CD4-positive, alpha-beta memory T cell (primary cell): ENCODE measurements at regions of chr6 and their contacts with region 1.

Region 1: DNA sequence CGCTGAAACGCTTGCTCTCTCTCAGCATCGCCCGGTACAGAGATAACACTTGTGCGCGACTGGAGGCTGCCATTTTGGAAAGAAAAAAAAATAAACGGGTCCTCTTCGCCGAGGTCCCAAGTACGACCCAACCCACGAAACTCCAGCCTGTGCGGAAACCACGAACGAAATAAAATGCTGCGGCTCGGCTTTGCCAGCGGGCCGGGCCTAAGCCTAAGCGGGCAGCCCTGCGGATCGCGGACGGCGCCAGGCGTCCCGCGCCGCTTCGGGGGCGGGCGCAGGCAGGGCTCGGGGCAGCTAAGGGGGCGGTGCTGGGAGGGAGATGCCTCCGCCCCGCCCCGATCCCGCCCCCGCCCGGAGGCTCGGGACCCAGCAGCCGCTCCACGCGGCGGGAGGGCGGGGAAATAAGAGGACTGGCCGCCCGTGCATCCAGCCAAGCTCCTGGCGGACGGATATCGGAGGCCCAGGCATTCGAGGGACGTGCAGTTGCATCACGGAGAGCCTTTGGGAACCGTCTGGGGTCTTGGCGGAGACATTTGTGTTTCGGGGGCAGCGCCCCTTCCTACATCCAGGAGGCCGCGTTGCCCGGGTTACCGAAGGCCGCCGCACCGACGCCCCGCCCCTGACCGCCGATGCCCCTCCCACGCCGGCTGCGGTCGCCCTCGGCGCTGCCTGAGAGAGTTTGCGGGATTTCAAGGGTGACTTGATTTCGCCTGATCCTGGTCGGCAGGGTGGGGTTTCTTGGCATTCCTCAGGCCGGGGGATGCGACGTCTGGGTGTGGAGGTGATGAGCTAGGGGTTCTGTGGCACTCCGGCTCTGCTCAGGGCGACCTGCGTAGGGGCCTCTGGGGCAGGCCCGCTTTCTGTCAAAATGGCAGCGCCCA is at the starts of genes FARS2 and LYRM4:
- DNase-seq: peak; percentile 90 to 99 (median 96)
- H3K4me3 ChIP-seq: peak within 1 kb of the TSS; percentile 95 to 96
- H3K4me3 Mint-ChIP-seq: peak within 1 kb of the TSS; percentile 96 to 99 (median 99)
- H3K27ac ChIP-seq: peak within 1 kb of the TSS; percentile 95
- H3K27ac Mint-ChIP-seq: peak within 1 kb of the TSS; percentile 99 to 100 (median 100)
- H3K4me1 ChIP-seq: peaks cover 21% of the 10 kb centered on the region
- H3K4me1 Mint-ChIP-seq: peaks cover 18 to 40% (median 27%) of the 10 kb centered on the region in 4 donors
- H3K27me3 ChIP-seq: no peaks in the 10 kb centered on the region
- H3K27me3 Mint-ChIP-seq: no peaks in the 10 kb centered on the region
- total RNA-seq, gene FARS2: 15.6 to 19.2 TPM
- total RNA-seq, gene LYRM4: 10.6 to 14.3 TPM

Region 2: GRCh38 chr6:5003604-5004372 is 257.1 kb before region 1 on chr6 and contains the start of gene RPP40:
- CTCF ChIA-PET with region 1: no interaction called
- POLR2A ChIA-PET with region 1: interaction called, 9 read pairs
- intact Hi-C with region 1: loop called (anchors 1 kb)
- DNase-seq: peak; percentile 98 to 99 (median 99)
- H3K4me3 ChIP-seq: peak within 1 kb of the TSS; percentile 33 to 85
- H3K4me3 Mint-ChIP-seq: peak within 1 kb of the TSS; percentile 93 to 97 (median 94)
- H3K27ac ChIP-seq: peak within 1 kb of the TSS; percentile 68
- H3K27ac Mint-ChIP-seq: peak within 1 kb of the TSS; percentile 94 to 97 (median 95)
- H3K4me1 ChIP-seq: peaks cover 10% of the 10 kb centered on the region
- H3K4me1 Mint-ChIP-seq: peaks cover 3 to 17% (median 10%) of the 10 kb centered on the region in 4 donors
- H3K27me3 ChIP-seq: no peaks in the 10 kb centered on the region
- H3K27me3 Mint-ChIP-seq: no peaks in the 10 kb centered on the region
- total RNA-seq, gene RPP40: 5.5 to 6.3 TPM

Region 3: DNA sequence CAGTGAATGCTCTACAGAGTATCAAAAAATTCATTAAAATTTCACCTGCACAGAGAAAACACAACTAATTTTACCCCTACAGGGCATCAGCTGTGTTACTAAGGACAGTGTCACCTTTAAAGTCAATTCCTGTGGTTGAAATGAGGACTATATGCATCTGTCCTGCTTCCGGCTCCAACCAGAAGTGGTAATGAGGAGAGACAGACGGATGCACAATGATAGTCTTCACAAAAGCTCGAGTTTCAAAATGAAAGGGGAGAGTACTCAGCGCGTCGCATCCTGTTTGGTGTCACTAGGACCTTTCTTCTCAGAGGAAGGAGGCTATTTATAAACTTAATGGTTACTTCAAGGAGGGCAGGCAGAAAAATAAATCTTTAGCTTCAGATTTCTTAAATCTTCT is 86.7 kb before region 1 on chr6:
- CTCF ChIA-PET with region 1: interaction called, 3 read pairs
- POLR2A ChIA-PET with region 1: interaction called, 17 read pairs
- intact Hi-C with region 1: loop called (anchors 2 kb)
- DNase-seq: peak; percentile 62 to 74 (median 72)
- H3K4me3 ChIP-seq: peak overlapping the region in 1 of 2 donors; percentile 4
- H3K4me3 Mint-ChIP-seq: peak overlapping the region; percentile 61 to 78 (median 70)
- H3K27ac ChIP-seq: peak overlapping the region; percentile 50
- H3K27ac Mint-ChIP-seq: peak overlapping the region; percentile 60 to 90 (median 82)
- H3K4me1 ChIP-seq: peaks cover 33% of the 10 kb centered on the region
- H3K4me1 Mint-ChIP-seq: peaks cover 30 to 43% (median 37%) of the 10 kb centered on the region in 4 donors
- H3K27me3 ChIP-seq: no peaks in the 10 kb centered on the region
- H3K27me3 Mint-ChIP-seq: no peaks in the 10 kb centered on the region

Region 4: DNA sequence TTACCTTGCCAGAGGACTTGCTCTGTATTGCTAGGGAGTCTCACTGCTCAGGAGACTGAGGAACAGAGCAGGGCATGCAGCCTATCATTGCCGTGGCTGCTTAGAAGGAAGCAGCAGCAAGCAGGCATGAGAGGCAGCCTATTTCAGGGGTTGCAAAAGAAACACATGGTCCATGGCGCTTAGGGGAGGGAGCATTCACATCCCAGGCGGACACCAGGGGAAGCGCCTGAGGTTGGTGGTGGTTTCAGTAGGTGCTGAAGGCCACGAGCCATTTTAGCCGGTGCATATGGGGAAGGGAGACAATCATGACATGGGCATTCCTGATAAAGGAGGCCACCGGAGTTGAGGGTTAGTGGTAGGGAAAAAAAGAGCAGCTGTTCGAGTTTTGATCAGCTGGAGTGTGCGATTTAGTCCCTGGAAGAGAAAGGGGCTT is 21.3 kb after region 1 on chr6:
- CTCF ChIA-PET with region 1: no interaction called
- POLR2A ChIA-PET with region 1: no interaction called
- intact Hi-C with region 1: no loop called
- DNase-seq: no peak
- H3K4me3 ChIP-seq: no peak overlapping the region
- H3K4me3 Mint-ChIP-seq: no peak overlapping the region
- H3K27ac ChIP-seq: no peak overlapping the region
- H3K27ac Mint-ChIP-seq: no peak overlapping the region
- H3K4me1 ChIP-seq: peaks cover 26% of the 10 kb centered on the region
- H3K4me1 Mint-ChIP-seq: peaks cover 30 to 54% (median 45%) of the 10 kb centered on the region in 4 donors
- H3K27me3 ChIP-seq: no peaks in the 10 kb centered on the region
- H3K27me3 Mint-ChIP-seq: no peaks in the 10 kb centered on the region